ENCODE measurements at regions of chr14 and their contacts with region 1.

Region 1: DNA sequence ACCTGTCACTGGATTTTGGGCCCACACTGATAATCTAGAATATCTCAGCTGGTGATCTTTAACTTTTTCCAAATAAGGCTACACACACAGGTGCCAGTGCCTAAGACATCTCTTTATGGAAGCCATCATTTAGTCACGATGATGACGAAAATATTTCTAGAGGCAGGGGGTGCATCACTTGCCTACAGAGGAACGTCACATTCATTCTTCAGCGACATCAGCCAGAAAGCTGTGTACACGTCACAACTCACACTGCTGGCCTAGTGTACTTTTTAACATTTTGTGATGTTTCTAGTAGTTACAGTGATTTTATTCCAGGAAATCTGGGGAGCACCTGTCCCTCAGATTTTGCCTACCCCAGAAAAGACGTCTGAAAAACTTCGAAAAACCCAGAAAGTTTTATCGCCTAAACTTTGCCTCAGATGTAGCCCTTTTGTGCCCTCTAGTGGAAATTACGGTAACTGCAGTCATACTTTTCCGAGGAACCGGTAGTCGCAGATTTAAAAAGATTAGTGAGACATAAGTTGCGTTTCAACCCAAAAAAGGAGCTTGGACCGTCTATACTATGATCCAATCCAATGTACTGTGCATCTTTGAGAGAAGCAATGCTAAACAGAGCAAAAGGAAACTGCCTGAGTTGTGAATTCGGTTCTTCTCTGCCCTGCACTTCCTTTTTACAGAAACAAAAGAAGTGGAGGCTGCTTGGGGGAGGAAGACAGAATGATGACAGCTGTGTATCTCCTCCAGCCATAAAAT is 64.3 kb upstream of the STON2 start:
- DNase-seq: peak; percentile 52
- H3K4me3 Mint-ChIP-seq: peak overlapping the region; percentile 73
- H3K27ac Mint-ChIP-seq: peak overlapping the region; percentile 63
- H3K4me1 Mint-ChIP-seq: peaks cover 3% of the 10 kb centered on the region
- H3K27me3 Mint-ChIP-seq: peaks cover 1% of the 10 kb centered on the region

Region 2: DNA sequence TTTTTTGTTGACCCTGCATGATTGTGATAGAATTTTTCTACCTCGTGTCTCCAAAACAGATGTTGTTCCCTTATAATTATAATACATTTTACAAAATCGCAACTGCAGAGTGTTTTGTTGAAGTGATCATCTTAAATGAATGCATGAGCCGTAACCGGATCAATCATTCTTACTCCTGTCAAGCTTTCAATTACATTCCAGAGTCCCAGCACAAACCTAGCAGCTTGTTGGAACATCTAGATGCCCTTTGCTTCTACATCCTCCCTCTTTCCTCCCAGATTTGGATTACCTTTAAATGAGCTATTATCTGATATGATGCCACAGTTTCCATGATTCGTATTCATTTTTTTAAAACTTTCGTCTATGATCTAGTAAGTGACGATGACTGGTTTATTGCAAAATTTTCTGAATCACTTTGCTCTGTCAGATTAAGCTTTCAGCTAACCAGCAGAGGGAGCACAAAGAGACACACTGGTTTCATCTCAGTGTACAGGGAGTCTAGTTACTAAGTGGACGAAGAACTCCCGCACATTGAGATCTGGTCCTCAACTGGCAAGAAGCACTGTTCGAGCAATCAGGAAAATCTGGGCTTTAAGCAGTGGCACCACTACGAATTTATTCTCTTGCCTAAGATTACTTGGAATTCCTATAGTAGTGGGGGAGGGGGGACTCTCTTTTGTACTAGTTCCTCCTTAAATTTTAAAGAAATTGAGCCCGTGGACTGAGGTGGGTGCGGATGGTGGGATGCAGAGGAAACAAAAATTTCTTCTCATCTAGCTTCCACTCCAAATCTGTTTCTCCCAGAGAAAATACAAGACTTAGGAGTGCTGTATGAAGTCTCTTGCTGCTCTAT is 468.1 kb before region 1 on chr14:
- CTCF ChIA-PET with region 1: no interaction called
- POLR2A ChIA-PET with region 1: no interaction called
- intact Hi-C with region 1: loop called (anchors 1 kb)
- DNase-seq: peak; percentile 20
- H3K4me3 Mint-ChIP-seq: no peak overlapping the region
- H3K27ac Mint-ChIP-seq: no peak overlapping the region
- H3K4me1 Mint-ChIP-seq: peaks cover 7% of the 10 kb centered on the region
- H3K27me3 Mint-ChIP-seq: peaks cover 15% of the 10 kb centered on the region

Region 3: DNA sequence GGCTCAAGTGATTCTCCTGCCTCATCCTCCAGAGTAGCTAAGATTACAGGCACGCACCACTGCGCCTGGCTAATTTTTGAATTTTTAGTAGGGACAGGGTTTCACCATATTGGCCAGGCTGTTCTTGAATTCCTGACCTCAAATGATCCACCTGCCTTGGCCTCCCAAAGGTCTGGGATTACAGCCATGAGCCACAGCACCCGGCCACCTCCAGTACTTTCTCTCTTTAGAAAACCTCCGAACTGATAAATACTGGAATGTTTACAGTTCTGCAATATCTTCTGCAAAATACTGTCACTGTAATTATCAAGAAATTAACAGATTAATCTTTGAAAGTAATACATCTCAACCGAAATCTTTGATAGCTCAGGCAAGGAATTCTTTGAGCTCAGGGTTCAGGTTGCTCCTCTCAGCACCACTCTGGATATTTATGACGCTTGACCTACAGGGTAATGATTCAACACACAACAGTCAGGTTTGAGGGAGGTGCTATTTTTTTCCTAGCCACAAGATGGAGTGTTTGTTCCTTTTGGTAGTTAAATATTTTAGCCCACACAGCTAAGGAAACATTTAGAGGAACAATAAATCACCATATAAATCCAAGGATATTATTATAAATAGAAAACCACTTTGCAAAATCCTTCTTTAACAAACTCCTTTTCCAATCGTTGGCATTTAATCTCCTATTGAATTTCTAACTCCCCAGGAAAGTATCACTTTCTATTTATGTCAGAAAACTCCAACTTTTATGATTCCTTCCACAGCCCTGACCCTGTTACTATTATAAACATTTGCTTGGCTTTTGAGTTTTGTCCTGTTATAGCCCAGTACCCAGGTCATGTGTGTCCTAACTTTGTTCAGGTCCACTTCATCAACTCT is 195.1 kb before region 1 on chr14:
- CTCF ChIA-PET with region 1: interaction called, 71 read pairs
- POLR2A ChIA-PET with region 1: no interaction called
- intact Hi-C with region 1: loop called (anchors 1 kb)
- DNase-seq: no peak
- H3K4me3 Mint-ChIP-seq: no peak overlapping the region
- H3K27ac Mint-ChIP-seq: no peak overlapping the region
- H3K4me1 Mint-ChIP-seq: no peaks in the 10 kb centered on the region
- H3K27me3 Mint-ChIP-seq: peaks cover 19% of the 10 kb centered on the region

Region 4: GRCh38 chr14:81453166-81453766 is 11.2 kb before region 1 on chr14:
- CTCF ChIA-PET with region 1: interaction called, 42 read pairs
- POLR2A ChIA-PET with region 1: no interaction called
- intact Hi-C with region 1: no loop called
- DNase-seq: peak; percentile 61
- H3K4me3 Mint-ChIP-seq: no peak overlapping the region
- H3K27ac Mint-ChIP-seq: no peak overlapping the region
- H3K4me1 Mint-ChIP-seq: no peaks in the 10 kb centered on the region
- H3K27me3 Mint-ChIP-seq: peaks cover 5% of the 10 kb centered on the region

Measured in activated CD4-positive, alpha-beta memory T cell treated with anti-CD3 and anti-CD28 coated beads for 36 hours (primary cell).